Activated CD4-positive, alpha-beta T cell treated with anti-CD3 and anti-CD28 coated beads for 36 hours (primary cell): ENCODE measurements at regions of chr12 and their contacts with region 1.

Region 1: GRCh38 chr12:120783197-120783596 is 57.6 kb downstream of the ACADS start:
- DNase-seq: peak; percentile 48
- ATAC-seq: peak; percentile 92
- H3K4me3 Mint-ChIP-seq: no peak overlapping the region
- H3K27ac Mint-ChIP-seq: peak overlapping the region; percentile 72
- H3K4me1 Mint-ChIP-seq: peaks cover 37% of the 10 kb centered on the region
- H3K27me3 Mint-ChIP-seq: no peaks in the 10 kb centered on the region

Region 2: DNA sequence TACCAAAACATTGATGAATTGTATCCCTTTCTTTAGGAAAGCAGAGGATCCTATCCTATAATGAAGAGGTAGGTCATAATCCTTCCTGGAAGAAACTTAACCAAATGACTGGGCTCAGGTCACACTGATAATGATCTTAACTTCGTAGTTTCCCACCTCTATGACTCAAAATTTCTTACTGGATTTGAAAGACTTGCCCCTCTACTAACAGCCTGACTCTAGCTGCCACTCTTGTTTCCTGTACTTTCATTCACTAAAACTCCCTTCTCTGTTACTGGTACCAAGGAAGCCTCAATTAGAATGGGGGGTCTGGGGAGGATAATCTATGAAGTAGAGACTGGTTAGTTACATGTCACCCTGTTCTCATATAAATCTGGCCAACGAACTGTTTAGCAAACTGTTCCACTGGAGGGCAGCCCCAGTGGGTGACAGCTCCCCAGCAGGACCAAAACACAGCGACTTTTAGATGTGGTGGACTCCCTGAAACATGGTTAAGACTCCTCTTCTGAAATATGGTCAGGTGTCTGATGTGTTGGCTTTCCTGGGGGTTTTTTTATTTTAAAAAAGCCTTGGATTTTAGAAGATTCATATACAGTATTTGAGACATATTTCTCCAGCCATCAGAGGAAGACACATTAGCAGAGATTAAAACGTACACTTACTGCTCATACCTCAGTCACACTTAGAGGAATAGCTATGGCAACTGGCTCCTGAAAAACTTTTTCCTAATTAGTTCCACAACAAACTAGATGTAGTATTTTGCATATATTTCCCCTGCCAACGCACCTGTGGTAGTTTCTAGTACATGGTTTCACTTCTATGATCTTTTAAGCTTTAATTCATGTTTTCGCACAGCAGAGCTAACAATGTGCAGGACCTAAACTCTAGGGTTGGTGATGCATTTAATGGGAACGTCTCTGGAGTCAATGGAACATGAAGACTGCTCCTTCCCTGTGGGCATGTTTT is 14.8 kb after region 1 on chr12:
- CTCF ChIA-PET with region 1: interaction called, 7 read pairs
- POLR2A ChIA-PET with region 1: no interaction called
- intact Hi-C with region 1: loop called (anchors 1 kb)
- DNase-seq: peak; percentile 30
- ATAC-seq: peak; percentile 76
- H3K4me3 Mint-ChIP-seq: no peak overlapping the region
- H3K27ac Mint-ChIP-seq: peak overlapping the region; percentile 83
- H3K4me1 Mint-ChIP-seq: peaks cover 65% of the 10 kb centered on the region
- H3K27me3 Mint-ChIP-seq: no peaks in the 10 kb centered on the region

Region 3: GRCh38 chr12:120820885-120821510 is 37.8 kb after region 1 on chr12:
- CTCF ChIA-PET with region 1: no interaction called
- POLR2A ChIA-PET with region 1: no interaction called
- intact Hi-C with region 1: loop called (anchors 1 kb)
- DNase-seq: peak; percentile 75
- ATAC-seq: peak; percentile 86
- H3K4me3 Mint-ChIP-seq: peak overlapping the region; percentile 43
- H3K27ac Mint-ChIP-seq: peak overlapping the region; percentile 81
- H3K4me1 Mint-ChIP-seq: peaks cover 44% of the 10 kb centered on the region
- H3K27me3 Mint-ChIP-seq: no peaks in the 10 kb centered on the region

Region 4: DNA sequence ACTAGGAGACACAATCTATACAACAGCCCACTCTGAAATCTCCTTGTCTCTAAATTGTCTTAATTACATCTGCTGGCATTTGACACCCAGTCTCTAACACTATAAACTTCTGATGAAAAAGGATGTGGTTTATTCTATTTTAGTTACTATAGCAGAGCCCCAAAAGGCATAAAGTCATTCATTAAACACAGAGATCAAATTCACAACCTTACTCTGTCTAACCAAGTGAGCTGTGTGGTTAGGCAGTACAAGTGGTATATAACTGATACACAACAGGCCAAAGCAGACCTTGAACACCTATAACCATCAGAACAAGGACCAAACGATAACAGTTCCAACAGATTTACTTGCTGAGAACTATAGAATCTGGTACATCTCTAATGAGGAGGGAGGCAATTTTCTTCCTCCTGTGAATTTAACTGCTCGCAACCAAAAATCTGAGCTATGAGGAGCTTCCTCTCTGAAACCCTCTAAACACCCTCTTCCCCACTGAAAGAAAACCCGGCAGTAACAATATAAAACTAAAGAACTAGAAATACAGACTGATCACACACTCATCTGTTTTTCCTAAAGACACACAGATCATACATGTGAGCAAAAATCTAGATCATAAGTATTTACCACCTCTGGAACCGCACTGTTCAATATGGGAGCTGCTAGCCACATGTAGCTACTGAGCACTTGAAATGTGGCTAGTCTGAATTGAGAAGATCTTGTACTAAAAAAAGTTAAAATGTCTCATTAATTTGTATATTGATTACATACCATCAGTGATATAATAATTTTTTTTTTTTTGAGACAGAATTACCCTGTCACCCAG is 103.2 kb after region 1 on chr12:
- CTCF ChIA-PET with region 1: no interaction called
- POLR2A ChIA-PET with region 1: no interaction called
- intact Hi-C with region 1: loop called in 1 of 2 experiments (anchors 5 kb)
- DNase-seq: no peak
- ATAC-seq: peak; percentile 85
- H3K4me3 Mint-ChIP-seq: peak overlapping the region; percentile 21
- H3K27ac Mint-ChIP-seq: peak overlapping the region; percentile 76
- H3K4me1 Mint-ChIP-seq: peaks cover 55% of the 10 kb centered on the region
- H3K27me3 Mint-ChIP-seq: no peaks in the 10 kb centered on the region

Region 5: GRCh38 chr12:120904197-120904773 is 121.1 kb after region 1 on chr12 and contains the start of gene SPPL3:
- CTCF ChIA-PET with region 1: no interaction called
- POLR2A ChIA-PET with region 1: no interaction called
- intact Hi-C with region 1: loop called in 1 of 2 experiments (anchors 5 kb)
- DNase-seq: peak; percentile 96
- ATAC-seq: peak; percentile 81
- H3K4me3 Mint-ChIP-seq: peak within 1 kb of the TSS; percentile 92
- H3K27ac Mint-ChIP-seq: peak within 1 kb of the TSS; percentile 95
- H3K4me1 Mint-ChIP-seq: peaks cover 28% of the 10 kb centered on the region
- H3K27me3 Mint-ChIP-seq: no peaks in the 10 kb centered on the region
- total RNA-seq, gene SPPL3: 29.5 to 48.2 TPM

Region 6: GRCh38 chr12:120961604-120962531 is 178.7 kb after region 1 on chr12:
- CTCF ChIA-PET with region 1: no interaction called
- POLR2A ChIA-PET with region 1: no interaction called
- intact Hi-C with region 1: loop called in 1 of 2 experiments (anchors 2 kb)
- DNase-seq: peak; percentile 27
- ATAC-seq: no peak
- H3K4me3 Mint-ChIP-seq: no peak overlapping the region
- H3K27ac Mint-ChIP-seq: peak overlapping the region; percentile 59
- H3K4me1 Mint-ChIP-seq: peaks cover 44% of the 10 kb centered on the region
- H3K27me3 Mint-ChIP-seq: no peaks in the 10 kb centered on the region